Thyroid gland (tissue), 4 donors: ENCODE measurements at regions of chr15 and their contacts with region 1.

Region 1: GRCh38 chr15:66700802-66701421 is 1.1 kb upstream of the SMAD6 start:
- DNase-seq: peak; percentile 98
- H3K4me3 ChIP-seq: peak overlapping the region in 2 of 3 donors; percentile 45 to 80
- H3K27ac ChIP-seq: peak overlapping the region; percentile 78 to 87 (median 82)
- H3K4me1 ChIP-seq: peaks cover 17 to 22% of the 10 kb centered on the region in 2 donors
- H3K27me3 ChIP-seq: no peaks in the 10 kb centered on the region
- CTCF ChIP-seq: no peak
- POLR2A ChIP-seq: peak in 1 of 2 donors; percentile 39

Region 2: GRCh38 chr15:66515901-66516322 is 185.0 kb before region 1 on chr15:
- intact Hi-C with region 1: no loop called
- DNase-seq: no peak
- H3K4me3 ChIP-seq: no peak overlapping the region
- H3K27ac ChIP-seq: no peak overlapping the region
- H3K4me1 ChIP-seq: no peaks in the 10 kb centered on the region
- H3K27me3 ChIP-seq: no peaks in the 10 kb centered on the region
- CTCF ChIP-seq: no peak
- POLR2A ChIP-seq: no peak

Region 3: DNA sequence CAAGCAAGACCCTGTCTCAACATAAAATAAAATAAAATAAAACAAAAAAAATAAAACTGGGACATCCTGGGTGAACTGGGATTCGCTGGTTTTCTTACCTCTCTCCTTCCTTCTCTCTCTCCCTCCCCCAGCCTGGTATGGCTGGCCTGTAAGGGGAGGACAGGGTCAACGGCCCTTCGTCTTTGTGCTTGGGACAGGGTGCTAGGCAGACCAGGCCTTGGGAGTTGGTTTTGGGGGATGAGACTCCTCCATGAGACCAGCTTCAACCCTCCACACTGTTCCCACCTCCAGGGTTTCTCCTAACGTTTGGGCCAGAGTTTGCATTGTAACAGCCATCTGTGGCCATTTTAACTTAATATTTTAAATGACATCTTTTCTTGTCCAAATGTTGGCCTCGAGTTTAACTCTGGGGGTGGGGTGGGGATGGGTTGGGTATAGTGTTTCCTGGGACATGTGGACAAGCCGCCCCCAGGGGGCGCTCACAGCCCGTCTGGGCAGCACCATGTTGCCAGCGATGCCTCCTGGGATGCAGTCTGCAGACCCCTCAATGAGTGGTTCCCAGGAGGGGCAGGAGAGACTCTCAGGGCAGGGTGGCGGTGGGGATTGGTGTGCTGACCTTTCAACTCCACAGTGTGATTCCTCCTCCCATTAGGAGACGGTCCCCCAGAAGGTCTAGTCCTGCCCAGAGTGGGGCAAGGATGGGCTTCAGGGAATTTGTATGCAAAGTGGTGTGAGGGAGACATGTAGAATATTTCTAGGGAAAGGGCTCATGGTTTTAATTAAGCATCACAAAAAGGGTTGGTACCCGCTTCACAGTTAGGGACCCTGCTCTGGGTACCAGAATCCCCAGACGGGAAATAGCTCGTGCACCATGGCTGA is 97.4 kb before region 1 on chr15:
- intact Hi-C with region 1: loop called (anchors 5 kb)
- DNase-seq: peak; percentile 62 to 65
- H3K4me3 ChIP-seq: no peak overlapping the region
- H3K27ac ChIP-seq: no peak overlapping the region
- H3K4me1 ChIP-seq: no peaks in the 10 kb centered on the region
- H3K27me3 ChIP-seq: no peaks in the 10 kb centered on the region
- CTCF ChIP-seq: peak; percentile 45 to 83 (median 74)
- POLR2A ChIP-seq: no peak

Region 4: DNA sequence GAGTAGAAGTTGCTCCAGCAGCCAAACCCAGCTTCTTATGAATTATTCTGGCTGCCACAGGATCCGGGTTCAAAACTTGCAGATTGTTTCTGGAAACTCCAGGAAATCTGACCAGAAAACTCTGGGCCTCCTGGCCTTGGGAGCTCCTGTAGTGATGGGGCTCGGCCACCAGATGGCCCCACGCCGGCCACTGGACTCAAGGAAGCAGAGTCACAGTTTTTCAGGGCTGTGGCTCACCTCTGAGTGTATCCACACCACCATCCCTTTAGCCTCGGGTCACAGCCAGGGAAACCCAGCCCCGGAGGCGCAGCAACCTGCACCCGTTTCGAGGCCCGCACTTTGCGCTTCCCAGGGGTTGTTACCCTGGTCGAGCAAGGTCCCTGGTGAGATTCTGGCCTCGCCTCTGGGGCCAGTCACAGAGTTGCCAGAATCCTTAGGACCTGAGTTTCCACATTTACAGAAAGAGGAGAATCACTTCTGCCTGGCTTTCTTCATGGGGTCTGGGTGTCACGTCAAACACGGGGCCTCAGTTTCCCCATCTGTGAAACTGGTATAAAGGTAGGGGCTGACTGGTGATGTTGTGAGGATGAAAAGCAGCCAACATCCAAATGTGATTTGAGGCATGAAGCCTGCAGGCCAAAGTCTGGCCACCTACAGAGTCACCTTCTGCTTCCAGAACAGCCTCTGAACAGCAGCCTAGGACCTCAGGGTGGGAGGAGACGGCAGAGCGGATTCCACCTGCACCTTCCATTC is 81.6 kb before region 1 on chr15:
- intact Hi-C with region 1: loop called (anchors 5 kb)
- DNase-seq: peak; percentile 76 to 82
- H3K4me3 ChIP-seq: no peak overlapping the region
- H3K27ac ChIP-seq: peak overlapping the region in 2 of 3 donors; percentile 45 to 78
- H3K4me1 ChIP-seq: peaks cover 11 to 56% of the 10 kb centered on the region in 2 donors
- H3K27me3 ChIP-seq: no peaks in the 10 kb centered on the region
- CTCF ChIP-seq: peak; percentile 76 to 90 (median 86)
- POLR2A ChIP-seq: no peak

Region 5: GRCh38 chr15:66774001-66774814 is 73.3 kb after region 1 on chr15:
- intact Hi-C with region 1: loop called (anchors 5 kb)
- DNase-seq: peak; percentile 95 to 96
- H3K4me3 ChIP-seq: peak overlapping the region in 1 of 3 donors; percentile 2
- H3K27ac ChIP-seq: peak overlapping the region; percentile 88 to 94 (median 92)
- H3K4me1 ChIP-seq: peaks cover 50 to 99% of the 10 kb centered on the region in 2 donors
- H3K27me3 ChIP-seq: no peaks in the 10 kb centered on the region
- CTCF ChIP-seq: peak; percentile 92 to 100 (median 97)
- POLR2A ChIP-seq: peak in 1 of 2 donors; percentile 54

Region 6: DNA sequence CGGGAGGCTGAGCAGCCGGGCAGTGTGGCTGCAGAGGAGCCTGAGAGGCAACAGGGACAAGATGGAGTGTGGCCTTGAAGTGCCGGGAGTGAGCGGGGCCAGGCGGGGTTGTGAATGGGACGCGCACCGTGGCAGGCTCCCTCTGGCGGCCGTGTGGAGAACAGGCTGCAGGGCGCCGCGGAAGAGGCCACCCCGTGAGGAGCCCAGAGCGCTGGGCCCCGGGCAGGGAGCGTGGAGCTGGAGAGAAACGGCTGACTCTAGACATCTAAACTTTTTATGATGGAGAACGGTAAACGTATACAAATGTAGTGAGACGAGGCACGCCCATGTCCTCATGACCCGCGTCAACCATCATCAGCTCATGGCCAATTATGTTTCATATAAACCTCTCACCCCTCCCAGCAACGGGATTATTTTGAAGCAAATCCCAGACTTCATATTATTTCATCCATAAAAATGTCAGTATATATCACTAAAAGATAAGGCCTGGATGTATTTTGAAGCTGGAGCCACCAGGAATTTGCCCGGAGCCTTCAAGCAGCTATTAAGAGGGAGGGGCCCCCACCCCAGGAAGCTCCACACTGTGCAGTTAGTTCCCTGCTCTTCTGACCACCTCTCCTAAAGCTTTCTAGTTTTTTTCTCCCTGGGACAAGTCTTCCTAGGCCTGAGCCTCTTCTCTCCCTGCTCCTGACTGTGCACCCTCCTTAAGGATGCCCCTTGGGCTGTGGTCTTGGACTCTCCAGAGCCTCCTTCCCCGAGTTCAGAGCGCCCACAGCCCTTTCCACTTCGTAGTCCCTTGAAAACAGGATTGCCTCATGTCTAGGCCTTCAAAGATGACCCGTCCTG is 150.5 kb after region 1 on chr15:
- intact Hi-C with region 1: loop called (anchors 5 kb)
- DNase-seq: peak; percentile 88 to 92
- H3K4me3 ChIP-seq: no peak overlapping the region
- H3K27ac ChIP-seq: peak overlapping the region in 1 of 3 donors; percentile 49
- H3K4me1 ChIP-seq: peaks cover 7 to 16% of the 10 kb centered on the region in 2 donors
- H3K27me3 ChIP-seq: no peaks in the 10 kb centered on the region
- CTCF ChIP-seq: peak; percentile 86 to 98 (median 96)
- POLR2A ChIP-seq: no peak